CD8-positive, alpha-beta T cell (primary cell): ENCODE measurements at regions of chr1 and their contacts with region 1.

Region 1: GRCh38 chr1:208093754-208094719 is 150.1 kb downstream of the PLXNA2 start:
- DNase-seq: peak; percentile 21 to 68 (median 58)
- ATAC-seq: peak; percentile 23
- H3K4me3 ChIP-seq: no peak overlapping the region
- H3K4me3 Mint-ChIP-seq: no peak overlapping the region
- H3K27ac ChIP-seq: no peak overlapping the region
- H3K27ac Mint-ChIP-seq: no peak overlapping the region
- H3K4me1 ChIP-seq: no peaks in the 10 kb centered on the region
- H3K4me1 Mint-ChIP-seq: no peaks in the 10 kb centered on the region
- H3K27me3 ChIP-seq: no peaks in the 10 kb centered on the region
- H3K27me3 Mint-ChIP-seq: no peaks in the 10 kb centered on the region
- CTCF ChIP-seq: peak; percentile 64

Region 2: DNA sequence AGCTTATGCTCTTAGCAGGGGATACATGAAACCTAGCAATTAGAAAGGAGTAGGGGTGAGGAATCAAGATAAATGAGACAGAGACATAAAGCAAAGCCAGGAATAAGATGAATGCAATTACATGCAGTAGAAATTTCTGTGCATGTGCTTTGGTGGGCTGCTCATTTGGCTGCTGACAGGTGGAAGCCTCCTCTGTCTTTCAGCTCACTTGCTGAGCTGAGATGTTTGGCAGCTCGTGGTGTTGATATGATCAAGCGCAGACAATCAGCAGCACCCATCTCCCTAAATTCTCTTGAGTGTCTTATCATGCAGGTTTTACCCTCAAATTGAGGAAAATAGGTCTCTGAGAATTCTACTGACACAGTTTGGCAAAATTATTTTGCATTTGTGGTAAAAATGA is 74.8 kb before region 1 on chr1:
- CTCF ChIA-PET with region 1: interaction called, 95 read pairs
- POLR2A ChIA-PET with region 1: no interaction called
- intact Hi-C with region 1: loop called (anchors 1 kb)
- DNase-seq: no peak
- ATAC-seq: no peak
- H3K4me3 ChIP-seq: no peak overlapping the region
- H3K4me3 Mint-ChIP-seq: no peak overlapping the region
- H3K27ac ChIP-seq: no peak overlapping the region
- H3K27ac Mint-ChIP-seq: no peak overlapping the region
- H3K4me1 ChIP-seq: no peaks in the 10 kb centered on the region
- H3K4me1 Mint-ChIP-seq: no peaks in the 10 kb centered on the region
- H3K27me3 ChIP-seq: peaks cover 0 to 3% of the 10 kb centered on the region in 2 experiments
- H3K27me3 Mint-ChIP-seq: peaks cover 3% of the 10 kb centered on the region
- CTCF ChIP-seq: no peak

Region 3: GRCh38 chr1:208357644-208358507 is 263.8 kb after region 1 on chr1:
- CTCF ChIA-PET with region 1: no interaction called
- POLR2A ChIA-PET with region 1: no interaction called
- intact Hi-C with region 1: no loop called
- DNase-seq: no peak
- ATAC-seq: no peak
- H3K4me3 ChIP-seq: no peak overlapping the region
- H3K4me3 Mint-ChIP-seq: no peak overlapping the region
- H3K27ac ChIP-seq: no peak overlapping the region
- H3K27ac Mint-ChIP-seq: no peak overlapping the region
- H3K4me1 ChIP-seq: no peaks in the 10 kb centered on the region
- H3K4me1 Mint-ChIP-seq: no peaks in the 10 kb centered on the region
- H3K27me3 ChIP-seq: no peaks in the 10 kb centered on the region
- H3K27me3 Mint-ChIP-seq: peaks cover 2% of the 10 kb centered on the region
- CTCF ChIP-seq: no peak